ENCODE measurements at regions of chr22 and their contacts with region 1.

Region 1: GRCh38 chr22:20430720-20431510 is 6.7 kb downstream of the SCARF2 start:
- DNase-seq: peak; percentile 64
- ATAC-seq: peak; percentile 43
- H3K4me3 Mint-ChIP-seq: peak overlapping the region; percentile 55
- H3K27ac Mint-ChIP-seq: no peak overlapping the region
- H3K4me1 Mint-ChIP-seq: peaks cover 20% of the 10 kb centered on the region
- H3K27me3 Mint-ChIP-seq: peaks cover 73% of the 10 kb centered on the region

Region 2: DNA sequence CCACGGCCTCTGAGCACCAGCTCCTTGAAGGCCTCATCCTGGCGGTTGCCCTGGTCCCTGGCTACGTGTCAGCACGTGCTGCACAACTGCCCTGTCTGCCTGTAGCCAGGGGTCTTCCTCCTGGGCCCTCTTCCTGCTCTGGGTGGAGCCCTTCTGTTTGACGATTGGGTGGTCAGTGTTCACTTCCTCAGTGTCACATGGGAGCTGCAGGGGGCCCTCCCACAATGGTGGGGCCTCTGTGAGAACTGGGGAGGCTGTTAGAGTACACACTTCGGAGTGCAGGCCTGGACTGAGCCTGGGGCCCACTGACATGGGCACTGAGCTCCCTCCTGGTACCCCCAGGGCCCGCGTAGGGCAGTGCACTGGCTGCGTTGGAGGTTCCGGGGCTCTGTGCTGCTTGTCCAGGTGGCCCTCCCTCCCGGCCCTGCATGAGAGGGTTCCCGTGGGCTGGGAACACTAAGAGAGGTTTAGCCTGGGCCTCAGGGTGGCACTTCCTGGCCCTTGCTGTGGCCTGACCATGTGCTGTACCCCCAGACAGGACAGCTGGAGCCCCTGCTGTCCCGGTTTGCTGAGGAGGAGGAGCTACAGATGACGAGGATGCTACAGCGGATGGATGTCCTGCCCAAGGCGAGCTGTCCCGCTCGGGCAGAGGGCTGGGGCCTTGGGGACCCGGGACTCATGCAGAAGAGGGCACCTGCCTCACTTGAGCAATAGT is 124.8 kb before region 1 on chr22:
- CTCF ChIA-PET with region 1: no interaction called
- DNase-seq: no peak
- ATAC-seq: no peak
- H3K4me3 Mint-ChIP-seq: no peak overlapping the region
- H3K27ac Mint-ChIP-seq: no peak overlapping the region
- H3K4me1 Mint-ChIP-seq: peaks cover 3% of the 10 kb centered on the region
- H3K27me3 Mint-ChIP-seq: peaks cover 12% of the 10 kb centered on the region

Region 3: GRCh38 chr22:20456064-20456721 is 25.3 kb after region 1 on chr22:
- CTCF ChIA-PET with region 1: interaction called, 25 read pairs
- DNase-seq: peak; percentile 85
- ATAC-seq: peak; percentile 93
- H3K4me3 Mint-ChIP-seq: no peak overlapping the region
- H3K27ac Mint-ChIP-seq: peak overlapping the region; percentile 29
- H3K4me1 Mint-ChIP-seq: peaks cover 10% of the 10 kb centered on the region
- H3K27me3 Mint-ChIP-seq: no peaks in the 10 kb centered on the region

Measured in activated CD8-positive, alpha-beta memory T cell treated with anti-CD3 and anti-CD28 coated beads, Interleukin-2, amount 10 ng/mL, durations not matched to agents 7 days and 5 days (primary cell).